ENCODE measurements at regions of chr1 and their contacts with region 1.

Region 1: GRCh38 chr1:21703318-21703963 is 34.3 kb upstream of the RAP1GAP start:
- DNase-seq: no peak
- ATAC-seq: peak; percentile 57 to 80 (median 68)
- H3K4me3 ChIP-seq: no peak overlapping the region
- H3K27ac ChIP-seq: no peak overlapping the region
- H3K4me1 ChIP-seq: peaks cover 0 to 10% (median 0%) of the 10 kb centered on the region in 4 donors
- H3K27me3 ChIP-seq: no peaks in the 10 kb centered on the region
- CTCF ChIP-seq: peak; percentile 26 to 55 (median 41)
- POLR2A ChIP-seq: no peak

Region 2: DNA sequence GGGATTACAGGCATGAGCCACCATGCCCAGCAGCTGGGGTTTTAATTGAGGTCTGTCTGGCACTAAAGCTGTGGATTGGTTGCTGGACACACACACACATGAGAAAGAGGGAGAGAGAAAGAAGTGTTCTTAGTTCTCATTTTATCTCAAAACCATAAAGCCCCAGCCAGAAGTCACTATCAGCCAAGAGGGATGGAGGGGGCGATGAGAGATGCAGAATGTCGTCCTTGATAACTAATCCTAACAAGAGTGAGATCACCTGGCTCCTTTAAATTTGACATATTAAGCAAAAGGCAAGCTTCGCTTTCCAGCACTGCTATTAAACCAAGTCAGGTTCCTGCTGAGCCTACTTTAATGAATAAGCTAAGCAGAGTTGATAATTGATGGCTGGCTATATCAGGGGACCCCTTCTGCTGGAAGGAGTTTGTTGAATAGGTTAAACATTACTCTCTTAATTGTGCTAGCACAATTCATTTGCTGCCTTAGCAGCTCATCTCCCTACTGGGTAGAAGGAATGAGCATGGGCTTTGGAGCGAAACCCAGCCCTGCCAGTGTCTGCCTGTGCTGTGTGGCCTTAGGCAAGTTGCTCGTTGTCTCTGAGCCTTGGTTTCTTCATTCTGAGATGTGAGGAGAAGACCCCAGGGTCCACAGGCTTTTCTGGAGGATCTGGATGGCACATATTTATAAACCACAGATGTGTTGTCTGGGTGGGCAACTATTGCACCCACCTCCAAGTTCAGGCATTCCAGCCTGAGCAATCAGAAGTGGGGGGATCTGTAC is 143.5 kb before region 1 on chr1:
- intact Hi-C with region 1: no loop called
- DNase-seq: no peak
- ATAC-seq: no peak
- H3K4me3 ChIP-seq: no peak overlapping the region
- H3K27ac ChIP-seq: no peak overlapping the region
- H3K4me1 ChIP-seq: no peaks in the 10 kb centered on the region
- H3K27me3 ChIP-seq: no peaks in the 10 kb centered on the region
- CTCF ChIP-seq: no peak
- POLR2A ChIP-seq: no peak

Region 3: DNA sequence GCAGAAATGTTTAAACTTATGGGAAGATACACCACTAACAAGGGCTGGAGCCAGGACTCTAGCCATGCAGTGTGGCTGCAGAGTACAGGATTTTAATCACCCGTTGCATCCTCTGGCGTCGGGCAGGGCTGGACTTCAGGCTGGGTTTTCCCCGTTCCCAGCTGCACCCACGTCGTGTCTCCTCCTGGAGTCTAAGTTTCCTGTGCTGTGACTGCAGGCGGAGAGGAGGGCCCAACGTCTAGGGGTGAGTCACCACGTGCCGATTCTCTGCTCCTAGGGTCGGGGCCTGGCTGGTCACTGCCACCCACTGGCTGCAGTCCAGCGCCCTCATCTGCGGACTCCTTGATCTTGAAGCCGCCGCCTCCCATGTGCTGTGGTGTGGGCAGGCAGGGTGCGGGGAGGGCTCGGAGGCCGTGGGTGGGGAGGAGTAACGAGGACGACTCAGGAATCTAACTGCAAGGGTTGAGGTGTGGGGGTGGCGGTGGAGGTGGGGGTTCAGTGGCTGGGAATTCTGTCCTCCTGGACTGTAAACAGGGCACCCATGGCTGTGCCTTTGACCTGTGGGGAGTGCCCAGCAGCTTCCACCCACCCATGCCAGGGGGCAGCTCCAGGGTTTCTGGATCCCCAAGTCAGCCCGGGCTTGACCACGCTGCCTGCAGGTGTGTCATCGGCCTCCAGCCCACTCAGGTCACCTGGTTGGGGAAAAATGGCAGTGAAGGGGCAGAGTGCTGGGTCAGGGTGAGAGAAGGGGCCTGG is 116.4 kb before region 1 on chr1:
- intact Hi-C with region 1: no loop called
- DNase-seq: peak in 1 of 3 donors; percentile 62
- ATAC-seq: peak; percentile 43 to 87 (median 63)
- H3K4me3 ChIP-seq: no peak overlapping the region
- H3K27ac ChIP-seq: no peak overlapping the region
- H3K4me1 ChIP-seq: no peaks in the 10 kb centered on the region
- H3K27me3 ChIP-seq: no peaks in the 10 kb centered on the region
- CTCF ChIP-seq: no peak
- POLR2A ChIP-seq: no peak

Region 4: GRCh38 chr1:21963477-21964217 is 260.2 kb after region 1 on chr1:
- intact Hi-C with region 1: loop called in 1 of 2 experiments (anchors 10 kb)
- DNase-seq: peak; percentile 73 to 77 (median 76)
- ATAC-seq: peak; percentile 90 to 97 (median 94)
- H3K4me3 ChIP-seq: no peak overlapping the region
- H3K27ac ChIP-seq: no peak overlapping the region
- H3K4me1 ChIP-seq: no peaks in the 10 kb centered on the region
- H3K27me3 ChIP-seq: no peaks in the 10 kb centered on the region
- CTCF ChIP-seq: peak; percentile 85 to 95 (median 87)
- POLR2A ChIP-seq: no peak